Activated CD4-positive, alpha-beta T cell treated with anti-CD3 and anti-CD28 coated beads, Interleukin-2, amount 10 ng/mL, durations not matched to agents 24 days and 14 days (primary cell): ENCODE measurements at regions of chr18 and their contacts with region 1.

Region 1: GRCh38 chr18:26642440-26643348 is 94.3 kb upstream of the KCTD1 start:
- DNase-seq: no peak
- H3K4me3 Mint-ChIP-seq: no peak overlapping the region
- H3K27ac Mint-ChIP-seq: no peak overlapping the region
- H3K4me1 Mint-ChIP-seq: no peaks in the 10 kb centered on the region
- H3K27me3 Mint-ChIP-seq: peaks cover 4% of the 10 kb centered on the region

Region 2: DNA sequence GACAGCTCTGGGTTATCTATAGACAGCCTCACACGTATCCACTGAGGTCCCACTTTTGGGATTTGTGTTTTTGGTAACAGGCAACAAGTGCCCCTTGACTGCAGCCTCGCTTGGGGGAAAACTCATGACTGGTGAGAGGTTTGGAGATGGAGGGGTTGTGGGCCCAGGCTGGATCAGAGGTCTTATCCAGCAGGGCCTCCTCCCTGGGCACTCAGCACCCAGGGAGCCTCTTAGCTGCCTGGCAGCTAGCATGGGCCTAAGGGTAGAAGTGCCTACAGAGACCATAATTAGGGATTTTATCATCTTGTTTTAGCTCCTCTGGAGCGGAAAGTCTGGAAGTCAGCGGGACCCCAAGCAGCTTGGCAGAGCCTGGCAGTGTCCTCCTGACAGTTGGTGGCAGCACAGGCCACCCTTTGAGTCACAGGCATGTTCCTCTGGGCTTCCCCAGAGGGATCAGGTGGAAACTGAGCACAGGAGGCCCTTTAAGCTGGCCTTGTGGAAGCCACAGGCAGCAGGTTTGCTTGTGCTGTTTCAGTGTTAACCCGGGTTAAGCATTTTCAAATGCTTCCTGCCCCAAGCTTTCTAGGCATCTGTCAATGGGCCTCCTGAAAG is 237.4 kb before region 1 on chr18:
- intact Hi-C with region 1: loop called (anchors 10 kb)
- DNase-seq: no peak
- H3K4me3 Mint-ChIP-seq: no peak overlapping the region
- H3K27ac Mint-ChIP-seq: no peak overlapping the region
- H3K4me1 Mint-ChIP-seq: no peaks in the 10 kb centered on the region
- H3K27me3 Mint-ChIP-seq: no peaks in the 10 kb centered on the region